Activated CD4-positive, alpha-beta T cell treated with anti-CD3 and anti-CD28 coated beads for 36 hours (primary cell): ENCODE measurements at regions of chr12 and their contacts with region 1.

Region 1: GRCh38 chr12:9331218-9331626 is 123.0 kb upstream of the PZP start:
- DNase-seq: peak; percentile 83
- ATAC-seq: peak; percentile 84
- H3K4me3 Mint-ChIP-seq: no peak overlapping the region
- H3K27ac Mint-ChIP-seq: no peak overlapping the region
- H3K4me1 Mint-ChIP-seq: peaks cover 19% of the 10 kb centered on the region
- H3K27me3 Mint-ChIP-seq: no peaks in the 10 kb centered on the region

Region 2: GRCh38 chr12:9347328-9348127 is 16.3 kb after region 1 on chr12:
- CTCF ChIA-PET with region 1: interaction called, 10 read pairs
- POLR2A ChIA-PET with region 1: no interaction called
- intact Hi-C with region 1: no loop called
- DNase-seq: peak; percentile 43
- ATAC-seq: peak; percentile 74
- H3K4me3 Mint-ChIP-seq: no peak overlapping the region
- H3K27ac Mint-ChIP-seq: peak overlapping the region; percentile 17
- H3K4me1 Mint-ChIP-seq: peaks cover 19% of the 10 kb centered on the region
- H3K27me3 Mint-ChIP-seq: no peaks in the 10 kb centered on the region

Region 3: GRCh38 chr12:9464408-9464807 is 133.2 kb after region 1 on chr12:
- CTCF ChIA-PET with region 1: interaction called, 3 read pairs
- POLR2A ChIA-PET with region 1: no interaction called
- intact Hi-C with region 1: loop called (anchors 2 to 10 kb)
- DNase-seq: no peak
- ATAC-seq: no peak
- H3K4me3 Mint-ChIP-seq: no peak overlapping the region
- H3K27ac Mint-ChIP-seq: no peak overlapping the region
- H3K4me1 Mint-ChIP-seq: peaks cover 10% of the 10 kb centered on the region
- H3K27me3 Mint-ChIP-seq: no peaks in the 10 kb centered on the region

Region 4: DNA sequence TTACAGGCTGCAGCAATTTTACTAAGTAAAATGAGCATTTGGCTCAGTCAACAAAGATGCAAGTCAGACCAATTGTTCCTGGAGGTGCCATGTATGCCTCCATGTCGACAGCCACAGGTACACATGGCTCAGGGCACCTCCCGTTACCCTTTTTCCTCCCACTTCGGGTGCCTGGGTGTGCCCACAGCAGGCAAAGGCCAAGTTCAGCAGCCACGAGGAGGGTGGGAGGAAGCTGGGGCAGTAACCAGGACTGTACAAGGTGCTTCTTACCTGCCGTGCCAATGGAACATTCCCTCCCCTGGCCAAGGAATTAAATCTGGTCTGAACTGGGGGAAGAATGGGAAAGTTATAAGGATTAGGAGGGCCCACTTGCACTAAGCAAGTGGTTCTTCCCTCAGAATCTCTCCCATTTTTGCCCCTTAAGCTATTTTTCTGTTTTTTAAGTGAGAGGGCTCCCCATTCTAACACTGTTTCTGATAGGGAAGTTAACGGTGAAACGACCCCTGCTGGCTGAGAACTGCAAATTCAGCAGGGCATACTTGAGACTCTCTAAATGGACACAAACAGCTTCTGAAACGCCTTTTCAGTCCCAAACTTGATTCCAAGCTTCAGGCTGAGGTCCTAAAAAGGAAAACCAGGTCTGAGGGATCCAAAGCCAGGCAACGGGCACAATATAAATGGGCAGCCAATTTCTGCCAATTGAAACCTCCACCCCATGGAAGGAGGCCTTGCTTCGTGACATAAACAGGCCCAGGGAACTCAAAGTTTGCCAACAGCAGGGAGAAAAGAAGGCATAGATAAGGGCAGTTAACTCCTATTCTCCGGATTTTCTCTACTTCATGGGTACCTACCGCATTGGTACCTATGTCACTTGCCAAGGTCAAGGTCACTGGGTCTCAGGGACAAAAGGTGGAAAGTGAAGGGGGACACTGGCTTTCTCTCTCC is 376.9 kb after region 1 on chr12:
- CTCF ChIA-PET with region 1: interaction called, 5 read pairs
- POLR2A ChIA-PET with region 1: no interaction called
- intact Hi-C with region 1: loop called in 1 of 2 experiments (anchors 1 kb)
- DNase-seq: peak; percentile 82
- ATAC-seq: peak; percentile 85
- H3K4me3 Mint-ChIP-seq: peak overlapping the region; percentile 60
- H3K27ac Mint-ChIP-seq: peak overlapping the region; percentile 94
- H3K4me1 Mint-ChIP-seq: peaks cover 50% of the 10 kb centered on the region
- H3K27me3 Mint-ChIP-seq: no peaks in the 10 kb centered on the region

Region 5: GRCh38 chr12:9721394-9722092 is 390.3 kb after region 1 on chr12:
- CTCF ChIA-PET with region 1: no interaction called
- POLR2A ChIA-PET with region 1: no interaction called
- intact Hi-C with region 1: loop called in 1 of 2 experiments (anchors 10 kb)
- DNase-seq: no peak
- ATAC-seq: no peak
- H3K4me3 Mint-ChIP-seq: no peak overlapping the region
- H3K27ac Mint-ChIP-seq: no peak overlapping the region
- H3K4me1 Mint-ChIP-seq: peaks cover 28% of the 10 kb centered on the region
- H3K27me3 Mint-ChIP-seq: no peaks in the 10 kb centered on the region

Region 6: GRCh38 chr12:9797722-9798619 is 466.7 kb after region 1 on chr12:
- CTCF ChIA-PET with region 1: no interaction called
- POLR2A ChIA-PET with region 1: no interaction called
- intact Hi-C with region 1: loop called in 1 of 2 experiments (anchors 5 kb)
- DNase-seq: peak; percentile 81
- ATAC-seq: peak; percentile 84
- H3K4me3 Mint-ChIP-seq: peak overlapping the region; percentile 72
- H3K27ac Mint-ChIP-seq: peak overlapping the region; percentile 92
- H3K4me1 Mint-ChIP-seq: peaks cover 42% of the 10 kb centered on the region
- H3K27me3 Mint-ChIP-seq: no peaks in the 10 kb centered on the region

Region 7: DNA sequence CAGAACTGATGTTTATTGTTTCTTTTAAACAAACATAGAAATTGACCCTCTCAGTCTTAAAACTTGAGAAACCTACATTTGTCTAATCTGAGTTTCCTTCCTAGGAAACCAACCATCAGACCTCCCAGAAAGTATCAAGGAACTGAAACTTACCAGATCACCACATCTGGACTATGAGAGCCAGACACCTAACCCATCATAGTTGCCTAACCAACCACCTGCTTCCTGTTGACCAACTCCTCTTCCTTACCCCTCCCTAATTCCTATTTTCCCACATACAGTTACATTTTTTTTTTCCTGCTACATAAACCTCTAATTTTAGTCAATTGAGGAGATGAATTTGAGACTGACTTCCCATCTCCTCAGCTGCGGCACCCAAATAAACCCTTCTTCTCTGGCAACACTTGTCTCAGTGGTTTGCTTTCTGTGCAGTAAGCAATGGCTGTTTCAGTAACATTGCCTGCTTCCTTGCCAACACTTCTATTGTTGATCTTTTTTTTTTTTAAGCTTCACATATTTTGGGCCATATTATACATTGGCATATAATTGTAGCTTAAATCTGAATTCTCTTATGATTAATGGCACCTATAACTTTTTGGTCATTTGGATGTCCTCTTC is 1010.8 kb after region 1 on chr12:
- CTCF ChIA-PET with region 1: no interaction called
- POLR2A ChIA-PET with region 1: no interaction called
- intact Hi-C with region 1: no loop called
- DNase-seq: no peak
- ATAC-seq: no peak
- H3K4me3 Mint-ChIP-seq: no peak overlapping the region
- H3K27ac Mint-ChIP-seq: no peak overlapping the region
- H3K4me1 Mint-ChIP-seq: no peaks in the 10 kb centered on the region
- H3K27me3 Mint-ChIP-seq: no peaks in the 10 kb centered on the region